Body of pancreas (tissue), 4 donors: ENCODE measurements at regions of chr9 and their contacts with region 1.

Region 1: DNA sequence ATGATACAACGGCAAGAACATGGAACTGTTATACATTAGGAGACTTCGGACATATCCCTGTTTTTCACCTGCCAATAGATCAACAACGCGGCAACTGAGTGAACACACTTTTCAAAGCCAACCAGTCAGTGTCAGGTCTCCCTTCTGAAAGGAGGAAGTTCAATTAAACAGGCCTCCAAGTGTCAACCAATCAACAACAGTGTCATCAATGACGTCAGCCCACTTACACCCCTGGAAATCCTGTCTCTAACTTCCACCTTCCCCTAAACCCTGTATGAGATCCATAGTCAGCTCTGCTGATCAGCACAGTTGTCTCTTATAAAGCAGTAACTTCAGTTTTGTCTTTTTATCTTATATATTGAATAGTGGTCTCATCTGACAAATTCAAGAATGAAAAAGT is 36.6 kb downstream of the DMRT3 start:
- DNase-seq: no peak
- ATAC-seq: no peak
- H3K4me3 ChIP-seq: no peak overlapping the region
- H3K27ac ChIP-seq: no peak overlapping the region
- H3K4me1 ChIP-seq: no peaks in the 10 kb centered on the region
- H3K27me3 ChIP-seq: no peaks in the 10 kb centered on the region
- CTCF ChIP-seq: no peak
- POLR2A ChIP-seq: no peak

Region 2: DNA sequence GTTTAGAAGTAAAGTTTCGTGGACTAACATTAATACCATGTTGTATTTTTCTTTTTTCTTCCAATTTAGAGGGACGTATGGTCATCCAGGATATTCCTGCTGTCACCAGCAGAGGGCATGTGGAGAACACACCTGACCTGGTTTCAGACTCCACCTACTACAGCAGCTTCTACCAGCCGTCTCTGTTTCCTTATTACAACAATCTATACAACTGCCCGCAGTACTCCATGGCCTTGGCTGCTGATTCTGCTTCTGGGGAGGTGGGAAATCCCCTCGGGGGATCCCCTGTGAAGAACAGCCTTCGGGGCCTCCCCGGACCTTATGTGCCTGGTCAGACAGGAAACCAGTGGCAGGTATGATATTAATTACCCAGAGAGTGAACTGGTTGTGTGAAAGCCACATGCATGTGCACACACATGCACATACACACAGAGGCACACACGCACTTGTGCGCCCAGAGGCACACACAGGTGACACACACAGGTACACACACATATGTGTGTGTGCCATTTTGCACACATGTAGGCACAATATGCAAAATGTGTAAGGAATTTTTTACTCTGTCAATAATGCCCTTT is 119.1 kb before region 1 on chr9:
- intact Hi-C with region 1: loop called (anchors 5 kb)
- DNase-seq: peak; percentile 72 to 84 (median 76)
- ATAC-seq: peak; percentile 97
- H3K4me3 ChIP-seq: no peak overlapping the region
- H3K27ac ChIP-seq: peak overlapping the region in 1 of 4 donors; percentile 7
- H3K4me1 ChIP-seq: peaks cover 4% of the 10 kb centered on the region
- H3K27me3 ChIP-seq: no peaks in the 10 kb centered on the region
- CTCF ChIP-seq: peak; percentile 58 to 96 (median 90)
- POLR2A ChIP-seq: no peak

Region 3: DNA sequence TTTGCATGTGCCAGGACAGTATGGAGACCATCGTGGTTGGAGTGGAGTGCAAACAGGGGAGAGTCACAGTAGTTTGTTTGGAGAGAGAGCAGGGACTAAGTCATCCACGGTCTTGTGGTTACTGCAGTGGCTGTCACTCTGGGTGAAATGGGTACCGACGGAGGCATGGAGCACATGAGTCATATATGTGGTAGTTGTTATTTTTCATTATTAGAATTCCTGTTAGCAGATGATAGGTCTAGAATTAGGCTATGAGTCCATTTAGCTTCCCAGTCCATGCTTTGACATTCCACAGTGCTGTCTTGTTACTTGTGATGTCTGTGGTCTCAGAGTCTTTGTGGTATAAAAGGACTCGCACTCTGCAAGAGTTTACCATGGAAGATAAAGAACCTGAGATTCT is 341.1 kb after region 1 on chr9:
- intact Hi-C with region 1: no loop called
- DNase-seq: no peak
- ATAC-seq: no peak
- H3K4me3 ChIP-seq: no peak overlapping the region
- H3K27ac ChIP-seq: no peak overlapping the region
- H3K4me1 ChIP-seq: no peaks in the 10 kb centered on the region
- H3K27me3 ChIP-seq: no peaks in the 10 kb centered on the region
- CTCF ChIP-seq: no peak
- POLR2A ChIP-seq: no peak